Activated CD4-positive, alpha-beta T cell treated with anti-CD3 and anti-CD28 coated beads for 36 hours (primary cell): ENCODE measurements at regions of chr13 and their contacts with region 1.

Region 1: DNA sequence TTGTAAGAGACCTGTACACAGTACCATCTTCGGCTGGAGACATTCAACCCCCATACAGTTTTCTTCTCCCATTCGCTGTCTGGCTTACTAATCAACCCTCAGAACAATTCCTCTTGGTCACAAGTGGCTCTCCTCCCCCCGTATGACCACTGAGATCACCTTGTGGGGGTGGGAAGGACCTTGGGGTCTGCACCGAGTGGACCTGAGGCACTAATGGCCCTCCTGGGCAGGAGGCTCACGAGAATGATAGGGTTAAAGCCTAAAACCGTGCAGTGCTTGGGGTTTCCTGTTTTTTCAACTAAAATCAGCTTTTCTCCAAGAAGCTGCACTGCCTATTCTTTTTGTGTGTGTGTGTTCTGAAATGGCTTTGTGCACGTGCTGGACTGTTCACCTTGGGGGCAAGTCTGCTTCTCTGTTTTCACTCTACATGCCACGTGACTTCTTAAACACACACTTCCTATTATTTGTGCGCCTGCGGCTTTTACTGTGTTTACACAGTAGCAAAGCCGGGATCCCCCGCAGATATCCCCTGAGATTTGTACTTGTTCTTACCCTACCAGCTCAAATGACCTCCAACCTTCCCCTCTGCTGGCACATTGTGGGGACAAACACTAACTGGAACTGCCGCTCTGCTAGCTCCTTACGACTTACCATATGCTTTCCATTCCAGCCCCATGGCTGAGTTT is 12.3 kb downstream of the RBM26 start:
- DNase-seq: peak; percentile 33
- ATAC-seq: peak; percentile 22
- H3K4me3 Mint-ChIP-seq: peak overlapping the region; percentile 33
- H3K27ac Mint-ChIP-seq: peak overlapping the region; percentile 39
- H3K4me1 Mint-ChIP-seq: peaks cover 70% of the 10 kb centered on the region
- H3K27me3 Mint-ChIP-seq: no peaks in the 10 kb centered on the region

Region 2: DNA sequence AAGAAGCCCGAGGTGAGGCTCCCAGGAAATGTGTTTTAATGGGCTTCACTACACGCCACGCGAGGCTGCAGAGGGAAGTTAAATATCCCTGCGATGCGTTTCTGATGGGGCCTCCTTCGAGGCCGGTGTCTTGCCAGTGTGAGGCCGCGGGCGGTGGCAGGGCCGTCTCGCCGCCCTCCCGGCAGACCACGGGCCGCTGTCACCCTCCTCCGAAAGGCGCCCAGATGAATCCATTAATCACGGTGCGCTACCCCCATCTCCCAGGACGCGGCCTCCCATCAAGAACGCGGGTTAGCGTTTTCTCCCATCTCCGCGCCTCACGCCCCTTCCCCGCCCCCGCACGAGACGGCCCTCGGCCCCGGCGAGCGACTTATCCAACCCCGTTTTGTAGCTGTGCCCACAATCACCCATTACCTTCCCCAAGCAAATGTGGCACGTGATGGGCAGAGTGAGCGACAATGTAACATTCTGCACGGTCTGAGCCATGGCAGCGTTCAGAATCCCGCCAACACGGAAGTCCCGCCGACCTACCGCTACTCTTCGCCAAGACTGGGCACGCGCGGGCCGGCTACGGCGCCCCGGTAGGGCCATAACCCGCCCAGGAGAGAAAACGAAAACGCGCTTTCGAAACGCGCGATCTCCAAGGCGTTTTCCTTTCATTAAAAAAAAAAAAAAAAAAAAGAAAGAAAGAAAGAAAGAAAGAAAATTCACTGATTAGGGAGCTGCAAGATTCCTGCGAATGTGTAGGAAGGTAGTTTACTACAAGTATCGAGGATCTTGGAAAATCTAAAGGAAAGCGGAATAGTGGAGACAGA is 734.9 kb before region 1 on chr13 and contains the start of gene OBI1:
- CTCF ChIA-PET with region 1: no interaction called
- POLR2A ChIA-PET with region 1: no interaction called
- intact Hi-C with region 1: loop called in 1 of 2 experiments (anchors 5 kb)
- DNase-seq: peak; percentile 94
- ATAC-seq: peak; percentile 93
- H3K4me3 Mint-ChIP-seq: peak within 1 kb of the TSS; percentile 85
- H3K27ac Mint-ChIP-seq: peak within 1 kb of the TSS; percentile 97
- H3K4me1 Mint-ChIP-seq: peaks cover 33% of the 10 kb centered on the region
- H3K27me3 Mint-ChIP-seq: no peaks in the 10 kb centered on the region
- total RNA-seq, gene OBI1: 20.5 to 20.6 TPM

Region 3: DNA sequence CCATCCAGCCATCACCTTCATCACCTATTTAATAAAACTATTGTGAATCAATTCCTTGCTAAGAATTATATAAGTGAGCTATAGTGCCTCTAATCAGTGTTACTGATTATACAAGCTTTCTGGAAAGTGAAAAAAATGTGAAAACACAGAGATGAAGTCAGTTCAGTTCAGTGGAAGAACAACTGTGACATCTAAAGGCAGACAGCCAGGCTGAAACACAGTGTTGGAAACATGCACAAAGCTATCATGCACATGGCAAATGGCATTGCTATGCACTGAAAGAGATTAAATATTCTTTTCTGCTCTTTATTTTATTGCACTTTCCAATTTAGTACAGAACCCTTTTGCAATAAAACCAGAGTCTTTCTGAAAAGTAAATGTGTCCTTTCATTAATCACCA is 281.7 kb before region 1 on chr13:
- CTCF ChIA-PET with region 1: no interaction called
- POLR2A ChIA-PET with region 1: no interaction called
- intact Hi-C with region 1: loop called in 1 of 2 experiments (anchors 5 kb)
- DNase-seq: no peak
- ATAC-seq: no peak
- H3K4me3 Mint-ChIP-seq: no peak overlapping the region
- H3K27ac Mint-ChIP-seq: no peak overlapping the region
- H3K4me1 Mint-ChIP-seq: no peaks in the 10 kb centered on the region
- H3K27me3 Mint-ChIP-seq: peaks cover 3% of the 10 kb centered on the region

Region 4: DNA sequence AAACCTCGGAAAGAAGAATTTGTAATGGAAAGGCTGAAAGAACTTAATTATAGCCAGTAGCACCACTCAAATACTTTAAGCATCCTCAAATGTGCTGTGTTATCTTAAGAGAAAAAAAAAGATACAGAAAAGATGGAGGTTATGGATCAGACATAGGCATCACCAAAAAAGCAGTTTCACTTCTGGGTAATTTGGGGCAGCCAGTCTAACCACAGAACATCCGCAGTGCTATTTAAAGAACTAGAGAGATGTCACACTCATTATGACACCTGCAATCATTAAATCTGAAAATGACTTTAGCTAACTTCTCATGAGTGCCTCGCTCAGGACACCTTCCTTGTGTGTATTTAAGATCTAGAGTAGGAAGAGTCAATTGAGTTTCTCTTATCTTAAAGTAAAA is 199.4 kb before region 1 on chr13:
- CTCF ChIA-PET with region 1: interaction called, 5 read pairs
- POLR2A ChIA-PET with region 1: no interaction called
- intact Hi-C with region 1: loop called in 1 of 2 experiments (anchors 2 kb)
- DNase-seq: peak; percentile 75
- ATAC-seq: peak; percentile 92
- H3K4me3 Mint-ChIP-seq: no peak overlapping the region
- H3K27ac Mint-ChIP-seq: peak overlapping the region; percentile 45
- H3K4me1 Mint-ChIP-seq: peaks cover 39% of the 10 kb centered on the region
- H3K27me3 Mint-ChIP-seq: peaks cover 2% of the 10 kb centered on the region

Region 5: DNA sequence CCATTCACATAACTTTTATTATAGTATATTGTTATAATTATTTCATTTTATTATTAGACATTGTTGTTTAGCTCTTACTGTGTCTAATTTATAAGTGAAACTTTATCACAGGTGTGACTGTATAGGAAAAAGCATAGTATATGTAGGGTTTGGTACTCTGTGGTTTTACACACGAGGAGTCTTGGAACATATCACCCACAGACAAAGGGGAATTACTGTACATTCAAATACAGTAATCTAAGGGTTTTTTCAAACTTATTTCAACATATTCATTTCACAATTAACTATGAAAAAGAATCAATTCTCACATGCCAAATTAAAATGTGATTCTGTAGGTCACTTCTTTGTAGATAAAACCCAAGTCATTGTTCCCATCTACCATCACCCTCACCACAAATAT is 33.6 kb before region 1 on chr13:
- CTCF ChIA-PET with region 1: no interaction called
- POLR2A ChIA-PET with region 1: no interaction called
- intact Hi-C with region 1: loop called in 1 of 2 experiments (anchors 2 kb)
- DNase-seq: no peak
- ATAC-seq: peak; percentile 44
- H3K4me3 Mint-ChIP-seq: no peak overlapping the region
- H3K27ac Mint-ChIP-seq: no peak overlapping the region
- H3K4me1 Mint-ChIP-seq: peaks cover 42% of the 10 kb centered on the region
- H3K27me3 Mint-ChIP-seq: no peaks in the 10 kb centered on the region

Region 6: DNA sequence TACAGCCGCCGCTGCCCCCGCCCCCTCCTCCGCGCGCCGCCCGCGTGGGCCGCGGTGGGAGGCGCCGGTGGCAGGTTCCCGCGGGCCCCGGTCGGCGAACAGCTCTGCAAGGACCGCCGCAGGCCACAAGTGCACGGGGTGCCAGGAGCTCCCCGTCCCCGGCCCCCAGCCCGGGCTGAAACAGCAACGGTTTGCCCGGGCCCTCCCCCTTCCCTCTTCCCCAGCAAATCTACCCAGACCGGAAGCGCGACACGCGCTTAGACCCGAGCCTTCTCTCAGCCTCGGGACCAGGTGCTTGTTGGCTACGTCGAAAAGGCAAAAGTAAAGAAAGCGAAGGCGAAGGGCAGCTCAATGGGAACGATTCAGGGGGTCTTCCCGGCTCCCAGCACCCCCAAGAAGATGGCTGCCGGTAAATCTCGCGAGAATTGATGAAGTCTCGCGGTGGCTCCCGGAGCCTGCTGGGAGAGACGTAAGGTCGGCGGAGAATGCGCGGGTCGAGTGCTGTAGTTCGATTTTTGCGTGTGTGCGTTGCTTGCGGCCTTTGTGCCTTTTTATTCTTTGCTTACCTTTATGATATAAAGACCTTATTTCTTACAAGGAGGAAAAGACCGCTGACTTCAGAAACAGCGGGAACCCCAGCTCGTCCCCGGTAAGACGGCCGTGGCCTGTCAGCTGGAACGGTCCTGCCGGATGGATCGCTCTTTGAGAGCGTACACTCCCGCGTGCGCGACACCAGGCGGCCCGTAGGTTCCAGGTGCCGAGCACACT is 12.3 kb after region 1 on chr13 and contains the start of gene RBM26:
- CTCF ChIA-PET with region 1: interaction called, 15 read pairs
- POLR2A ChIA-PET with region 1: interaction called, 10 read pairs
- intact Hi-C with region 1: loop called (anchors 1 kb)
- DNase-seq: peak; percentile 97
- ATAC-seq: peak; percentile 87
- H3K4me3 Mint-ChIP-seq: no peak within 1 kb of the TSS
- H3K27ac Mint-ChIP-seq: peak within 1 kb of the TSS; percentile 98
- H3K4me1 Mint-ChIP-seq: peaks cover 44% of the 10 kb centered on the region
- H3K27me3 Mint-ChIP-seq: no peaks in the 10 kb centered on the region
- total RNA-seq, gene RBM26: 61.3 to 79.6 TPM

Region 7: GRCh38 chr13:79451500-79451962 is 57.8 kb after region 1 on chr13:
- CTCF ChIA-PET with region 1: interaction called, 3 read pairs
- POLR2A ChIA-PET with region 1: interaction called, 4 read pairs
- intact Hi-C with region 1: loop called (anchors 1 to 2 kb)
- DNase-seq: peak; percentile 97
- ATAC-seq: peak; percentile 97
- H3K4me3 Mint-ChIP-seq: peak overlapping the region; percentile 75
- H3K27ac Mint-ChIP-seq: peak overlapping the region; percentile 99
- H3K4me1 Mint-ChIP-seq: peaks cover 81% of the 10 kb centered on the region
- H3K27me3 Mint-ChIP-seq: no peaks in the 10 kb centered on the region